ENCODE measurements at regions of chr16 and their contacts with region 1.

Region 1: GRCh38 chr16:49407873-49408550 is 34.4 kb downstream of the C16orf78 start:
- H3K4me3 ChIP-seq: no peak overlapping the region
- H3K27ac ChIP-seq: no peak overlapping the region
- H3K4me1 ChIP-seq: no peaks in the 10 kb centered on the region
- CTCF ChIP-seq: peak; percentile 92

Region 2: GRCh38 chr16:49592546-49593423 is 184.8 kb after region 1 on chr16:
- CTCF ChIA-PET with region 1: interaction called, 14 read pairs
- POLR2A ChIA-PET with region 1: no interaction called
- H3K4me3 ChIP-seq: no peak overlapping the region
- H3K27ac ChIP-seq: no peak overlapping the region
- H3K4me1 ChIP-seq: no peaks in the 10 kb centered on the region
- CTCF ChIP-seq: peak; percentile 36; the same call in 1 of the 2 replicates

Region 3: DNA sequence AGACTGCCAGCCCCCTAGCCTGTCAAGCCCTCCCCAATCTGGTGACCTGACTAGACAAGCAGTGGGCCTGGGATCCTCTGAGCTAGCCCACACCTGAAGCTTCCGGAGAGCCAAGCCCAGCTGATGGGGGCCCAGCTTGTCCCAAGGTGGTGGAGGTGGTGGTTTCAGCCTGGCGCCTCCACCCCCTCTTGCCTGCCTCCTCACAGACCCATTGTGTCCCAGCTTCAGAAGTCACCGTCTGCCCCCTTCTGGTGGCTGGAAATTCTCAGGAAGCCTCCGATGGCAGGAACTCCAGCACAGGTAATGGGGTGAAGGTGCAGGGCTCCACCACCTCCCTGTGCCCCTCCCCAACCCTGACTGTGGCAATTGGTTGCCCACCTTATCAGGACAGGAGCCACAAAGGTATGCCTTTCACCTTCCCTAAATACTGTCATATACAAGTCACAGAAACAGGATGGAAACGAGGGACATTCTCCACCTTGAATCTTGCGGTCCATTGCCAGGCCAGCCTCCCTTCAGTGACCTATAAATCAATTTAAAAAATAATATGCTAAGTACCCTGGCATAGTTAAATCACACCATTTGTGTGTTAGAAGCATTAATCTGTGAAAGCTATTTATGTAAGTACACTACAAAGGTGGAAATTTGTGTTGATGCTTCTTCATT is 513.9 kb after region 1 on chr16:
- CTCF ChIA-PET with region 1: interaction called, 21 read pairs
- POLR2A ChIA-PET with region 1: no interaction called
- H3K4me3 ChIP-seq: no peak overlapping the region
- H3K27ac ChIP-seq: no peak overlapping the region
- H3K4me1 ChIP-seq: no peaks in the 10 kb centered on the region
- CTCF ChIP-seq: peak; percentile 83

Region 4: GRCh38 chr16:49958448-49958847 is 550.4 kb after region 1 on chr16:
- CTCF ChIA-PET with region 1: interaction called, 14 read pairs
- POLR2A ChIA-PET with region 1: no interaction called
- H3K4me3 ChIP-seq: no peak overlapping the region
- H3K27ac ChIP-seq: no peak overlapping the region
- H3K4me1 ChIP-seq: peaks cover 3% of the 10 kb centered on the region; the same call in 1 of the 2 replicates
- CTCF ChIP-seq: no peak

Measured in HEK293 (cell line).